ENCODE measurements at regions of chr5 and their contacts with region 1.

Region 1: GRCh38 chr5:138128334-138128733 is 10.9 kb downstream of the NME5 start:
- DNase-seq: no peak

Region 2: DNA sequence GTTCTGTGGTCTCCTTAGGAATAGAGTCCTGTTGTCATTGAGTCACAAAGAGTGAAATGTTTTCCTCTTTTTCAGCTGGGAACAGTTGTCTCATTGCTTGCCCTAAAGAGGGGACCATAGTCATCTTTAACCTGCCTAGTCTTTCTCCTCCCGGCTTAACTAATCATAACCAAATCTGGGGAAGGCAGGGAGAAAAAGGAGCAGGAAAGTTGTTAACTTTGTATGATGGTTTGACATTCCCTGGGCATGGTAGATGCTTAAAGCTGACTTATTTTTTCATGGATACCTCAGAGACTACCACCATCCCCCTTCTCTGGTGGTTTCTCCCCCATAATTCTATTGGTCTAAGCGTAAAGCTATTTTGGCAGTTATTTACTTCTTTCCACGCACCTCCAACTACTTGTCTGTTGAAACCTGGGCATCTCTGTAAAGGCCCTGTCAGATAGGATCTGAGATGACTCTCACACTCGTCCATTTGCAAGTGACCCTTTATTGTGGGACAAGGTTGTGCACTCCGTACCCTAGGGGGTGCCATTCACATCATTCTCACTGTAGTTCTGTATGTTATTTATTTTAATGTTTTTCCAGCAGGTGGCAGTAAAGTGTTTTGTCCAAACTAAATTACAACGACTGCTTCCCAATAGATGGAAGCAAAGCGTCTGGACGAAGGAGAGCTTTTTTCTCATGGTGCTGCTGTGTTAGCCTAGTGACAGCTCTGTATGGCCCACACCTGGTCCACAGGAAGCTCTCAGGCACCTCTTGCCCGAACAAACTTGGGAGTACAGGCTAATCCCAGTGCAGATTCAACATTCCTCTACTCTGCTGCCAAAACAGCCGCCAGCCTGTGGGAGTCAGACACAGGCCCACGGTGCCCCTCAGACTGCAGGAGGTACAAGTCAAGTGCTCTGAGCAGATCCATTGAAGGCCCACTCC is 92.5 kb before region 1 on chr5:
- CTCF ChIA-PET with region 1: interaction called, 10 read pairs
- POLR2A ChIA-PET with region 1: interaction called, 4 read pairs
- DNase-seq: peak; percentile 68

Region 3: DNA sequence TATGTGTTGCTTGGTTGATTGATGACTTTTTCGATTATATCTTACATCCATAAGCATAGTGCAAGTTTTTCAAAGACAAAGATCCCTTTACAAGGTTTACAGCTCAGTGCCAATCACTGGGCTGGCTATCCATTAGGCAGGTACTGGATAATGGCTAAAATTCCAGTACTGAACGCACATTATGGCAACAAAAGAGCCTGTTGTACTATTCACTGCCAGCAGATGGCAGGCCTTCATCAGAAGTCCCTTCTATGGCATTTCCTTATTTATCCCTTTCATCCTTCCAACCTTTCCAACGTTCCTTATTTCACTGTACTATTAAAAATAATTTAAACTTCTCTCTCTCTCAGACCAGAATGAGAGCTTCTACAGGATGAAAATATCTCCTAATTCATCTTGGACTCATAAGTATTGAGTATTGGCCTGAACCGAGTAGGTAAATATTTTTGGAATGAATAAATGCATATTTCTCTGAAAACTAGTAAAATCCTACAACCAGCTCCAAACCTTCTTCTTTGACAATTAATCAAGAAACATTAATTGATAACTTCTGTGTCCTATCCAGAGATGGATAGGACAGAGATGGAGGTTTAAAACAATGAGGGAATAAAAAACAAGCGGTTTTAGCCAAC is 51.2 kb before region 1 on chr5:
- CTCF ChIA-PET with region 1: interaction called, 38 read pairs
- POLR2A ChIA-PET with region 1: interaction called, 3 read pairs
- DNase-seq: peak; percentile 69

Measured in HEK293T (cell line).